Psoas muscle (tissue), 8 donors: ENCODE measurements at regions of chr1 and their contacts with region 1.

Region 1: DNA sequence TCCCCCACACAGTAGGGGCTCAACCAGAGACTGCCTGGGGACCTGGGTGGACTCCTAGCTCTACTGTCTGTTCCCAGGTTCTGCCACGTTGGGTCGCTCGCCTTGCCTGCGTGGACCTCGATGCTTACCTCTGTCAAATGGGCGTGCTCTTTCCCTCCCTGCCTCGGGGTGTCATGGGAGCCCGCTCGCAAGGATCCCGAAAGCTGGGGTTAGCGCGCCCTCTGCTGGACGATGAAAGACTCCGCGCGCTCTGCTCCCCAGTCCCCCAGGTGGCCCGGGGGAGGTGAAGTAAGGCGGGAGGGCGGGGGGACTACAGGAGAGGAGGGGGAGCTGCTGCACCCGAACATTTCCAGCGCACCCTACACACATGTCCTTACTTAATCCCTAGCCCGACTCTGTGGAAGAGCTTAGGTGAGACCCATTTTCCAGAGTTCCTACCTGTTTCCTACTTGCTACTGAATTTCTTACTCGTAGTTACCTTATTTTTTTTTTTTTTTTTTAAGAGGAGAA is 2.3 kb upstream of the BSND start:
- DNase-seq: peak; percentile 82 to 88
- ATAC-seq: peak; percentile 85 to 97 (median 91)
- H3K4me3 ChIP-seq: no peak overlapping the region
- H3K27ac ChIP-seq: no peak overlapping the region
- H3K4me1 ChIP-seq: no peaks in the 10 kb centered on the region
- H3K27me3 ChIP-seq: peaks cover 0 to 15% (median 4%) of the 10 kb centered on the region in 3 donors
- CTCF ChIP-seq: peak; percentile 84

Region 2: DNA sequence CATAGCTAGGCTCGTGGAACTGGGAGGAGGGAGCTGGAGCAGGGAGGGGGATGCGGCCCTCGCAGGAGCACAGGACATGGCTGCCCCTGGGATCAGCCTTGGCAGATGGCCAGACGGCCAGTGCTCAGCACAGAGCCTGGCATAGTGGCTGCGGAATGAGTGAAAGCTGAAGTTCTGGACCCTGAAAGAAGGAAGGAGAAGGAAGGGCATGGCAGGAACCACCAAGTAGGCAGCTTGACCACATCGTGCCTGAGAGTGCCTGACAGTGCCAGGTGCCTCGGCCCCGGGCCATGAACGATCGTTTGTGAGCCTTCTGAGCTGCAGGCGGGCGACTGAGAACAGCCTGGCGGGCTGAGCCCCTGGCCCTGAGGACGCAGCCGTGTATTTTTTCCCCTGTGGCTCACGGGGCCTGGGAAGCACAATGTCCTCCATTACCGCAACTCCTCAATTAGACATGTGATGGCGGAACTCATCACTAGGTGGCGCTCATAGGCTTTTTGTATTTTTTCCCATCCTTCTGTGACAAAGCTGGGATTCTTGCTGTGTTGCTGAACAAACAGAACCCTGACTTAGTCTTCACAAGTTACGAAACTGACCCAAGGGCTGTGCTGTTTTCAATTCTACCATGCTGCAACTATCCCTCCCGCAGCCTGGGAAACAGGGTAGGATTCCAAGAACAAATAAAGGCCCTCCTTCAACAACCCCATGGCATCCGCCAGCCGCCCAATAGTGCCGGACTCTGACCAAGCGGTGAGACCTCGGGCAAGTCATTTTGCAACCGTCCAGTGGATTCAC is 45.8 kb before region 1 on chr1:
- intact Hi-C with region 1: loop called (anchors 1 kb)
- DNase-seq: peak; percentile 66 to 80
- ATAC-seq: peak; percentile 84 to 92 (median 88)
- H3K4me3 ChIP-seq: peak overlapping the region; percentile 42
- H3K27ac ChIP-seq: peak overlapping the region; percentile 47
- H3K4me1 ChIP-seq: peaks cover 3% of the 10 kb centered on the region
- H3K27me3 ChIP-seq: no peaks in the 10 kb centered on the region
- CTCF ChIP-seq: peak; percentile 74